Activated B cell treated with CpG ODN at 0.5 μM for 24 hours (primary cell): ENCODE measurements at regions of chr2 and their contacts with region 1.

Region 1: DNA sequence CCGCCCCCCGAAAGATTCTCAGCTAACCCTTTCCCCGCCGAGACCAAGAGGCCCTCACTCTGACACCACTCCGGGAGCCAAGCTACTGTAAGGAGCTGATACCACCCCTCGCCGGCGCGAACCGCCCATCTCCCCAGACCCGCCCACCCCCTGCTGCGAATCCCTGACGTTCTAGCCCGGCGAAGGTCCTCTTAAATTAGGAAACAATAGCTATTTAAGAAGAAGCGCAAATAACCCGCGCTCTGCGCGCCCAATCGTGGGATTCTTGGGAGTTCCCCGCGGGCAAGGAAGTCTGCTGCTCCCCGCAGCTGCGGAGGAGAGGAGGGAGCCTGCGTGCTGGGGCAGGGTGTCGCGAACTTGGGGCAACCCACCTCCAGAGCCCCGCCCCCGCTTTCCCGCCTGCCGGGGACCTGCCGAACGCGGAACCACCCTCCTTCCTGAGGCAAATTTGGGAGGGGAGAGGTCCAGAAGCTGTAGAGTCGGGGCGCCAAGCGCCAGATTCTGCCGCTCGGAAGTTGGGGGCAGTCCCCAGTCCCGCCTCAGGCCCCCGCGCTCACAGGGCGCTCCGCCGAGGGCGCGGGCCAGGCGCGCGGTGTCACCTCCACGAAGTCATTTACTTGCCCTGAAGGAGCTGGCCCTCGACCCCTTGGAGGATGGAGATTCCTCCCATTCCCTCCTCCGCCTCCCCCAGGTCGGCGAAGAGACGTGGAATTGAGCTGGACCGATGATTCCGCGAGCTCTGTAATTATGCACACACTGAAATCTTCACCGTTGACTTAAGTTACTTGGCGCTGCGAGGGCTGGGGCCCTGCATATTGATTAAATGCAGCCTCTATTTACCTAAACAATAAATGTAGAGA is 8.4 kb upstream of the SP9 start:
- DNase-seq: no peak
- ATAC-seq: peak; percentile 50
- H3K4me3 Mint-ChIP-seq: peak overlapping the region; percentile 85
- H3K27ac Mint-ChIP-seq: peak overlapping the region; percentile 18
- H3K4me1 Mint-ChIP-seq: peaks cover 27% of the 10 kb centered on the region
- H3K27me3 Mint-ChIP-seq: peaks cover 55% of the 10 kb centered on the region
- CTCF ChIP-seq: no peak

Region 2: GRCh38 chr2:173571021-173571882 is 755.1 kb before region 1 on chr2:
- CTCF ChIA-PET with region 1: no interaction called
- POLR2A ChIA-PET with region 1: no interaction called
- intact Hi-C with region 1: loop called (anchors 5 kb)
- DNase-seq: no peak
- ATAC-seq: no peak
- H3K4me3 Mint-ChIP-seq: no peak overlapping the region
- H3K27ac Mint-ChIP-seq: no peak overlapping the region
- H3K4me1 Mint-ChIP-seq: peaks cover 3% of the 10 kb centered on the region
- H3K27me3 Mint-ChIP-seq: peaks cover 6% of the 10 kb centered on the region
- CTCF ChIP-seq: no peak

Region 3: GRCh38 chr2:173752152-173752551 is 574.2 kb before region 1 on chr2:
- CTCF ChIA-PET with region 1: no interaction called
- POLR2A ChIA-PET with region 1: no interaction called
- intact Hi-C with region 1: loop called (anchors 5 kb)
- DNase-seq: no peak
- ATAC-seq: no peak
- H3K4me3 Mint-ChIP-seq: no peak overlapping the region
- H3K27ac Mint-ChIP-seq: no peak overlapping the region
- H3K4me1 Mint-ChIP-seq: no peaks in the 10 kb centered on the region
- H3K27me3 Mint-ChIP-seq: peaks cover 5% of the 10 kb centered on the region
- CTCF ChIP-seq: no peak

Region 4: DNA sequence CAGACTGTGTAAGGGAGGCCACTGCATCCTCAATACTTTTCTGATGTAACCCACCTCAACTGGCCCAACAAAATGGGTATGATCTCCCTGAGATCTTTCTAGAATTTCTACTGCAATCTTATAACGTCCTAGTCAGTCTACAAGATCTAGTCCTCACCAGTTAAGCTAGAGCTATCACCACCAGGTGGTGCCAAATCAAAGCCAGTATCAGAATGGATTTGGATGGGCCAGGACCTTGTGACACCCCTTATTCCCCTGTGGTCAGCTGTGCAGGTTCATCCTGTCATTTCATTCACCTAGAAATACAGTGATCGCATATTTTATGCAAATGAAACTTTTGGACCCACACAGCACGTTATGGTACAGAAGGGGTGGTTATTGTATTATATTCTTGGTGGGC is 168.4 kb before region 1 on chr2:
- CTCF ChIA-PET with region 1: no interaction called
- POLR2A ChIA-PET with region 1: no interaction called
- intact Hi-C with region 1: loop called (anchors 5 kb)
- DNase-seq: no peak
- ATAC-seq: peak; percentile 37
- H3K4me3 Mint-ChIP-seq: no peak overlapping the region
- H3K27ac Mint-ChIP-seq: no peak overlapping the region
- H3K4me1 Mint-ChIP-seq: no peaks in the 10 kb centered on the region
- H3K27me3 Mint-ChIP-seq: no peaks in the 10 kb centered on the region
- CTCF ChIP-seq: no peak

Region 5: GRCh38 chr2:174682007-174682577 is 355.7 kb after region 1 on chr2:
- CTCF ChIA-PET with region 1: no interaction called
- POLR2A ChIA-PET with region 1: no interaction called
- intact Hi-C with region 1: no loop called
- DNase-seq: peak; percentile 49
- ATAC-seq: peak; percentile 52
- H3K4me3 Mint-ChIP-seq: peak overlapping the region; percentile 86
- H3K27ac Mint-ChIP-seq: peak overlapping the region; percentile 65
- H3K4me1 Mint-ChIP-seq: peaks cover 16% of the 10 kb centered on the region
- H3K27me3 Mint-ChIP-seq: no peaks in the 10 kb centered on the region
- CTCF ChIP-seq: no peak